Sciatic nerve (tissue), 2 donors: ENCODE measurements at regions of chr19 and their contacts with region 1.

Region 1: GRCh38 chr19:8505680-8506401 is 3.4 kb upstream of the PRAM1 start:
- DNase-seq: peak; percentile 90
- ATAC-seq: peak; percentile 83

Region 2: GRCh38 chr19:8355631-8356402 is 150.0 kb before region 1 on chr19:
- intact Hi-C with region 1: loop called (anchors 10 kb)
- DNase-seq: no peak
- ATAC-seq: peak; percentile 63

Region 3: DNA sequence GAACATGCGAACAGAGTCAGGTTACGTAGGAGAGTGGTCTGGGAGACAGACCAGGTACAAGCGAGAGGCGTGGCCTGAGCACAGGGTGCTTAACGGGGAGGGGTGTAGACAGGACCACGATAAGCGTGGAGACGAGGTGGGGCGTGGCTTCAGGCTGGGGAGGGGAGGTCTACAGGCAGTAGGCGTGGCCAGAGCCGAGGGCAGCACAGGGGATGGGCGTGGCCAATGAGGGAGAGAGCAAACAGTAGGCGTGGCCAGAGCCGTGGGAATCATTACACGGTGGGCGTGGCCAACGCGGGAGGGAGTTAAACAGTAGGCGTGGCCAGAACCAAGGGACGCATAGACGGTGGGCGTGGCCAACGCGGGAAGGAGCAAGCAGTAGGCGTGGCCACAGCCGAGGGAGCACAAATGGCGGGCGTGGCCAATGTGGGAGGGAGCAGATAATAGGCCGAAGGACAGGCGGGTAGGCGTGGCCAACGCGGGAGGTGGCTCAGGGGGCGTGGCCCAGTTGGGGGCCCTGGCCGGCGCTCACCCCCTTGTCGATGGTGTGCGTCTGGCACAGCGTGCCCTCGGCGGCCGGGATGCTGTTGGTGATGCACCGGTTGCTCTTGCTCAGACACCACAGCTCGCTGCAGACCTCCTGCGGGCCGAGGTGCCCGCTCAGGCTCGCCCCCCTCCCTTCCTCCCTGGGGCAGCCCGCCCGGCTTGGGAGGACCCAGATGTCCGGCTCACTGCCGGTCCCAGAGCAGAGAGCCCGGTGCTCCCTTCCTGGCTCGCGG is 86.6 kb after region 1 on chr19:
- intact Hi-C with region 1: no loop called
- DNase-seq: peak; percentile 100
- ATAC-seq: peak; percentile 96

Region 4: DNA sequence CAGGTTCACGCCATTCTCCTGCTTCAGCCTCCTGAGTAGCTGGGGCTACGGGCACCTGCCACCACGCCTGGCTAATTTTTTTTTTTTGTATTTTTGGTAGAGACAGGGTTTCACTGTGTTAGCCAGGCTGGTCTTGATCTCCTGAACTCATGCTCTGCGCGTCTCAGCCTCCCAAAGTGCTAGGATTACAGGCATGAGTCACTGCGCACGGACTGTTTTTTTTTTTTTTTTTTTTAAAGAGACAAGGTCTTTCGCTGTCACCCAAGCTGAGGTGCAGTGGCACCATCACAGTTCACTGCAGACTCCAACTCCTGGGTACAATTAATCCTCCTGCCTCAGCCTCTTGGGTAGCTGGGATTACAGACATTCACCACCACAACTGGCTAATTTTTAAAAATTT is 112.9 kb after region 1 on chr19:
- intact Hi-C with region 1: no loop called
- DNase-seq: no peak
- ATAC-seq: no peak